ENCODE measurements at regions of chr15 and their contacts with region 1.

Region 1: DNA sequence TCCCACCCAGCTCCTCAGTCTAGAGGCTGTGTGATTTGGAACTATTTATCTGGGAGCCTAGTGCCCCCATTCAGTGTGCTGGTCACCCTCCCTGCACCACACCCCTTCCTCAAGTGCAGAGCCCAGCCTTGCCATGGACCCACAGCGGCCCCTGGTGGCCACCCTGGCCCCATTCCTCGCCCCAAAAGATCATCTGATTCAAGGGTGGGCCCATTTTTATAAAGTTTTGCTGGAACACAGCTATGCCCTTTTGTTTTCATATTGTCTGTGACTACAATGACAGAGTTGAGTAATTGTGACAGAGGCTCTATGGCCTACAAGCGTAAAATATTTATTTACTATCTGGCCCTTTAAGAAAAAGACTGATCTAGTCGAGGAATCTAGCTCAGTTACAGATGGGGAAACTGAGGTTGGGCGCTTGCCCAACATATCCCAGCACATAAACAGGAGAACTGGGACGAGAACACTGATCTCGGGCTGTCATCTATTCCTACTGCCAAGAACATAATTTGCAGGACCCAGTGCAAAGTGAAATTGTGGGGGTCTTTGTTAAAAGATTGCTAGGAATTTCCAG is 1.8 kb downstream of the FES start:
- DNase-seq: peak in 1 of 2 experiments; percentile 61
- ATAC-seq: peak; percentile 57 to 82; a peak in 5 of 6 replicates
- H3K4me3 ChIP-seq: no peak overlapping the region
- H3K27ac ChIP-seq: peak overlapping the region in 1 of 2 experiments; percentile 19; a peak in 1 of 6 replicates
- H3K4me1 ChIP-seq: no peaks in the 10 kb centered on the region
- CTCF ChIP-seq: peak; percentile 99
- EP300 ChIP-seq: no peak
- POLR2A ChIP-seq: no peak
- RAD21 ChIP-seq: peak; percentile 100

Region 2: GRCh38 chr15:90648137-90649070 is 237.7 kb before region 1 on chr15:
- CTCF ChIA-PET with region 1: interaction called, 265 read pairs
- POLR2A ChIA-PET with region 1: no interaction called
- DNase-seq: peak; percentile 77 to 78
- ATAC-seq: peak; percentile 32 to 72; a peak in 3 of 6 replicates
- H3K4me3 ChIP-seq: no peak overlapping the region
- H3K27ac ChIP-seq: no peak overlapping the region
- H3K4me1 ChIP-seq: peaks cover 13% of the 10 kb centered on the region; the same call in 2 of the 3 replicates
- CTCF ChIP-seq: peak; percentile 98
- EP300 ChIP-seq: no peak
- POLR2A ChIP-seq: no peak
- RAD21 ChIP-seq: peak; percentile 96 to 97

Region 3: DNA sequence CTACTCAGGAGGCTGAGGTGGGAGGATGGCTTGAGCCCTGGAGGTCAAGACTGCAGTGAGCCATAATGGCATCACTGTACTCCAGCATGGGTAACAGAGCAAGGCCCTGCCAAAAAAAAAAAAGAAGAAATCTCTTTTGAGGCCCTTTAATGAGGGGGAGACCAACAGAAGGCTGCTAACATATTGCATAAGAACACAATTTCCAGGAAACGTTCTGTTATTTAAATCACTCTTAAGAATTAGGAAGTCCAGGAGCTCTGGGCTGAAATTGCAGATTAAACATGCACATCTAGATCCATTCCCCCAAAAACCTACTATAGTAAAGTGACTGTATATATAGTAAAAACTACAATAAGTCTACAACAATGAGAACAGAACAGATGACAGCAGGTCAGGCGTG is 185.1 kb before region 1 on chr15:
- CTCF ChIA-PET with region 1: interaction called, 19 read pairs
- POLR2A ChIA-PET with region 1: no interaction called
- DNase-seq: no peak
- ATAC-seq: no peak
- H3K4me3 ChIP-seq: no peak overlapping the region
- H3K27ac ChIP-seq: no peak overlapping the region
- H3K4me1 ChIP-seq: no peaks in the 10 kb centered on the region
- CTCF ChIP-seq: no peak
- EP300 ChIP-seq: no peak
- POLR2A ChIP-seq: no peak
- RAD21 ChIP-seq: no peak

Region 4: DNA sequence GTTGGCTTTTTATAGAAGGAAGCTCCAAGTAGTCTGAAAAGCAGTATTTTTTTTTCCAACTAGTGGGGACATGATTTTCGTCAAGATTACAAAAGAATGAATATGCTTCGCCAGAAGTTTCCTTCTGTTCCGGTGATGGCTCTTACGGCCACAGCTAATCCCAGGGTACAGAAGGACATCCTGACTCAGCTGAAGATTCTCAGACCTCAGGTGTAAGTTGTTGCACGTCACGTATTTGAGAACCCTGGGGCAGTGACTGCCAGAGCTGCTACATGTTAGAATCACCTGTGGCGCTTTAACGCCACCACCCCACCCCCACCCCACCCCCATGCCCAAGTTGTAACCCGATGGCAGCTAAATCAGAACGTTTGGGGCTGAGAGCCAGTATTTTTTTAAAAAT is 116.8 kb before region 1 on chr15:
- CTCF ChIA-PET with region 1: interaction called, 21 read pairs
- POLR2A ChIA-PET with region 1: no interaction called
- DNase-seq: no peak
- ATAC-seq: no peak
- H3K4me3 ChIP-seq: no peak overlapping the region
- H3K27ac ChIP-seq: no peak overlapping the region
- H3K4me1 ChIP-seq: peaks cover 7% of the 10 kb centered on the region
- CTCF ChIP-seq: no peak
- EP300 ChIP-seq: no peak
- POLR2A ChIP-seq: no peak
- RAD21 ChIP-seq: no peak

Region 5: GRCh38 chr15:90829942-90830440 is 56.1 kb before region 1 on chr15:
- CTCF ChIA-PET with region 1: interaction called, 13 read pairs
- POLR2A ChIA-PET with region 1: no interaction called
- DNase-seq: no peak
- ATAC-seq: no peak; a peak in 1 of 6 replicates
- H3K4me3 ChIP-seq: no peak overlapping the region
- H3K27ac ChIP-seq: no peak overlapping the region
- H3K4me1 ChIP-seq: no peaks in the 10 kb centered on the region
- CTCF ChIP-seq: no peak
- EP300 ChIP-seq: no peak
- POLR2A ChIP-seq: no peak
- RAD21 ChIP-seq: no peak

Region 6: DNA sequence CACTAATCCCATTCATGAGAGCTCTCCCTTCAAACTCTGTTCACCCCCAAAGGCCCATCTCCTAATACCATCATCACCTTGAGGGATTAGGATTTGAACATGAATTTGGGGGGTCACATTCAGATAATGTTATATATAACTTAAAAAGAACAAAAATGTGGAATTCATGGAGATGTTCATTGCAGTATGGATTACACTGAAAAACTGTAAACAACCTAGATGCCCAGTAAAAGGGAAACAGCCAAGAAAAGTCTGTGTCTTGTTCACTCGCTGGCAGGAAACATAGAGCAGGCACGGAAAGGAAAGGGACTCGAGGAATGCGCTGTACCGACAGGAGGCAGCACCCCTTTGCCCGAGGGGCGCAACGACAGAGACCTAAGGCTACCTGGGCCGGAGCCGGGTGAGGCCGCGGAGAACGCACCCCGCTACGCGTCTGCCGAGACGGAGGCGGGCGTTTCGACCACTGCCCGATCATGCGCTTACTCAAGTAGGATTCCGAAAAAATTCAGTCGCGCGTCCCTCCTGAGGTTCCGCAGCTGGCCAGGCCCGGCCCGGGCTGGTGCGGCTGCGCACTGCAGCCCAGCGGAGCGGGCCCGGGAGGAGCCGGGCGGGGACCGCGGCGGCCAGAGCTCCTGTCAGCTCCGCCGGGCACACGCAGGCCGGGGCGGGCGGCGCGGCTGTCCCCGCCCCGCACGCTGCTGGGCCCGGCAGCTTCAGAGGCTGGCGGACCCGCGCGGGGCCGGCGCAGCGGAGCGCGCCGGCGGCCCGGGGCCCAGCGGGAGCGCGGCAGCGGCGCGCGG is 16.1 kb after region 1 on chr15:
- CTCF ChIA-PET with region 1: interaction called, 79 read pairs
- POLR2A ChIA-PET with region 1: no interaction called
- DNase-seq: peak; percentile 88 to 99
- ATAC-seq: peak; percentile 88 to 94
- H3K4me3 ChIP-seq: peak overlapping the region; percentile 81
- H3K27ac ChIP-seq: peak overlapping the region; percentile 88
- H3K4me1 ChIP-seq: peaks cover 14% of the 10 kb centered on the region
- CTCF ChIP-seq: peak; percentile 90
- EP300 ChIP-seq: no peak
- POLR2A ChIP-seq: peak; percentile 91
- RAD21 ChIP-seq: peak; percentile 25 to 59; a peak in 4 of 5 replicates

Region 7: DNA sequence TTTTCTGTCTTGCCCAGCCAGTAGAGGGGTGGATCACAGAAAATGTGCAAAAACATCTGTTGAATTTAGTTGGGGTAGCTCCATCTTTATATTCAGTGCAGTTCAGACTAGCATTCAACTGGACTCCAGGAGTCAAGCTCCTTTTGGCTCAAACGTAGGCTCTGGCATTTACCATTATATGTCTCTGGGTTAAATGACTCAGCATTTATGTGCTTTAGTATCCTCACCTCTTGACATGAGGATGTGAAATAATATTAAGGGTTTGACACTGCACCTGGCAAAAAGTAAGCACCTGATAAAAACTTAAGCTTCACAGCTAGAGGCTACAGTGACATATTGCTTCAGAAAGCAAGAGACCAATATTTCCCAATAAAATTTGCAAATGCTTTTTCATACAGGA is 93.5 kb after region 1 on chr15:
- CTCF ChIA-PET with region 1: no interaction called
- POLR2A ChIA-PET with region 1: no interaction called
- DNase-seq: peak in 1 of 2 experiments; percentile 18
- ATAC-seq: peak in 1 of 2 experiments; percentile 28; a peak in 1 of 6 replicates
- H3K4me3 ChIP-seq: no peak overlapping the region
- H3K27ac ChIP-seq: peak overlapping the region; percentile 65 to 82
- H3K4me1 ChIP-seq: peaks cover 12% of the 10 kb centered on the region
- CTCF ChIP-seq: no peak
- EP300 ChIP-seq: no peak
- POLR2A ChIP-seq: no peak
- RAD21 ChIP-seq: no peak